Dendritic cell treated with granulocyte-macrophage colony-stimulating factor and Interleukin-4, amounts not matched to agents 40 ng/mL and 50 ng/mL, for 4 days (primary cell): ENCODE measurements at regions of chr15 and their contacts with region 1.

Region 1: DNA sequence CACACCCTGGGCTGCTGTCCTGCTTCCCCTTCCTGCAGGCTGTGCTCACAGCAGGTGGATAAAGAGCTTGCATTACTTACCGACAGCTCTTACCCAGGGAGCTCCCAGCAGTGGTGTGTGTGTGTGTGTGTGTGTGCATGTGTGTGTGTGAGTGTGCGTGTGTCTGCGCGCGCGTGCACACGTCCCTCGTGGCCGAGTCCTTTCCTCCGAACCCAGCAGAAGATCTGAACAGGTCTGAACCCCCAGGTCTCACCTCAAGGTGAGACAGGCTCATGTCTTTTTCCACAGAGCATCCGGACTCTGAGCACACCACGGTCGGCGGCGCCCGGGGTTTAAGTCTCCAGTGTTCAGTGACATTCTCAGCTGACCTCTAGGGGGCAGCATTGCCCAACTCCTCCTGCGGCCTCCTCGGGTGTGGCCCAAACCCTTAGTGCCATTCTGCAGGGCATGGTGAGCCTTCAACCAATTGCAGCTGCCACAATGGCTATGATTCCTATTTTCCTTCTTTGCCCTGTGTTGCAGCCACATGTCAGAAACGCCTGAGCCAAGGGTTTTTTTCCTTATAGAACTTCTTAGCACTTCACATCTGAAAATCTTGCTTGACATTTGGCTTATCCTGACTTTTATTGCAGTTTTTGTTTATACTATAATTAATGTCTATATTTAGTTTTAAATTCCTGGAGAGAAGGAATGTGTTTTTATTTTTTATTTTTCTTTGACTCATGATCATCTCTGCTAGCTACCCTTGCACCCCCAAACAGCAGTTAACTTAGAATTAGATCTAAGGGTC is 64.1 kb upstream of the KLHL25 start:
- H3K4me3 Mint-ChIP-seq: peak overlapping the region; percentile 15
- H3K27ac Mint-ChIP-seq: no peak overlapping the region
- H3K4me1 Mint-ChIP-seq: peaks cover 11% of the 10 kb centered on the region
- H3K27me3 Mint-ChIP-seq: peaks cover 23% of the 10 kb centered on the region

Region 2: DNA sequence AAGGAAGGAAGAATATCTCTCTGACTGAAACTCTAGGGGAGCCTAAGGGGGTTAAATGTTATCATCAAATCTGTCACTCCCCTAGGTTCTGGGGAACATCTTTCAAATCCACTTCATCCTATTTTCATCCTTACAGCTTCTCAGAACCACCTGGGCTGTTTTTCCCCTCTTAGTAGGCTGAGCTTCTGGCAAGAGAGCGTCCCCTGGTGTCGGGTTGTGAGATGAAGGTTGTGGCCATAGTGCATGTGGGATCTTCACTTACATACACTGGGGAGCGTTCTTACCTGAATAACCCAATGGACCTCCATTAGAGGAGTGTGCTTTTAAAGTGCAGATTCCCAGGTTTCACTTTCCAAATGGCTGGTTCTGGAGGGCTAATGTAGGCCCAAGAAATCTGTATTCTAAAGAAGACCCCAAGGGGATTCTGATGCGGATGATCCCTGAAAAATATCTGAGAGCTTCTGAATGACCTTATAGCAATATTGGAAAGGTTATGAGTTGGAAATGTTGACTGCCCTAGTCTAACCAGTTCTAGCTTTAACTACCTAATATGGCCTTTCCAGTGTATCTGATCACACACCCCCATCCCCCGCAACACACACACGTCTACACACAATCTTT is 884.6 kb after region 1 on chr15:
- intact Hi-C with region 1: loop called (anchors 5 kb)
- H3K4me3 Mint-ChIP-seq: no peak overlapping the region
- H3K27ac Mint-ChIP-seq: no peak overlapping the region
- H3K4me1 Mint-ChIP-seq: no peaks in the 10 kb centered on the region
- H3K27me3 Mint-ChIP-seq: no peaks in the 10 kb centered on the region

Region 3: GRCh38 chr15:87604857-87605446 is 1746.2 kb after region 1 on chr15:
- intact Hi-C with region 1: loop called (anchors 5 kb)
- H3K4me3 Mint-ChIP-seq: no peak overlapping the region
- H3K27ac Mint-ChIP-seq: no peak overlapping the region
- H3K4me1 Mint-ChIP-seq: no peaks in the 10 kb centered on the region
- H3K27me3 Mint-ChIP-seq: no peaks in the 10 kb centered on the region